Tibial artery (tissue), 4 donors: ENCODE measurements at regions of chr17 and their contacts with region 1.

Region 1: GRCh38 chr17:44218344-44219107 is 949 bp downstream of the UBTF start:
- DNase-seq: peak; percentile 77 to 94
- H3K4me3 ChIP-seq: peak overlapping the region; percentile 81 to 83
- H3K27ac ChIP-seq: peak overlapping the region; percentile 94 to 99
- H3K4me1 ChIP-seq: peaks cover 0 to 36% (median 28%) of the 10 kb centered on the region in 4 donors
- H3K27me3 ChIP-seq: no peaks in the 10 kb centered on the region
- CTCF ChIP-seq: peak; percentile 32 to 72

Region 2: DNA sequence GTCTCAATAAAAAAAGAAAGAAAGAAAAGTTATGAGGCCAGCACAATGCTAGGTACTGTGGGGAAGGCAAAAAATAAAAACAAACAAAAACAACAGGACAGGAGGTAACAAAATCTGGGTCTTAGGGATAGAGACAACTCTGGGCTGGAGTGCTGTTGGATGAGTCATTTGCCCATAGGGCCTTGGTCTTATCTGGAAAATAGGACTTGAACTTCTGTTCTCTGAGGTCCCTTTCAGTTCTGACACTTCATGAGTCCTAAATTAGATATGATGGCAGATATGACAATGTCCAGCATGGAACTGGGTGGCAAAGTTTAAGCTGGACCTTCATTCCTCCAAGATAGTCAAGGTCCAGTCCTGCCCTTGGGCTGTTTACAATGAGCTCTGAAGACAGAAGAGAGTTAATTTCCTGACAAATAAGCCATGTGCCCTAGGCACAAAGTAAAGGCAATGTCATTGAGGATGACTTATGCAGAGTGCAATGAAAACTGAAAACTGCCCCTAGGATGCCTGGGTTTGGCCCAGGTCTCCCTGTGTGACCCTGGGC is 86.2 kb before region 1 on chr17:
- intact Hi-C with region 1: no loop called
- DNase-seq: no peak
- H3K4me3 ChIP-seq: no peak overlapping the region
- H3K27ac ChIP-seq: no peak overlapping the region
- H3K4me1 ChIP-seq: peaks cover 0 to under 1% (median 0%) of the 10 kb centered on the region in 4 donors
- H3K27me3 ChIP-seq: no peaks in the 10 kb centered on the region
- CTCF ChIP-seq: no peak

Region 3: GRCh38 chr17:44324571-44325275 is 106.2 kb after region 1 on chr17 and contains the start of gene SLC25A39:
- intact Hi-C with region 1: loop called (anchors 2 kb)
- DNase-seq: peak; percentile 92 to 97
- H3K4me3 ChIP-seq: peak within 1 kb of the TSS; percentile 78 to 98
- H3K27ac ChIP-seq: peak within 1 kb of the TSS; percentile 89 to 90
- H3K4me1 ChIP-seq: peaks cover 0 to 31% (median 24%) of the 10 kb centered on the region in 4 donors
- H3K27me3 ChIP-seq: no peaks in the 10 kb centered on the region
- CTCF ChIP-seq: no peak